ENCODE measurements at regions of chr6 and their contacts with region 1.

Region 1: DNA sequence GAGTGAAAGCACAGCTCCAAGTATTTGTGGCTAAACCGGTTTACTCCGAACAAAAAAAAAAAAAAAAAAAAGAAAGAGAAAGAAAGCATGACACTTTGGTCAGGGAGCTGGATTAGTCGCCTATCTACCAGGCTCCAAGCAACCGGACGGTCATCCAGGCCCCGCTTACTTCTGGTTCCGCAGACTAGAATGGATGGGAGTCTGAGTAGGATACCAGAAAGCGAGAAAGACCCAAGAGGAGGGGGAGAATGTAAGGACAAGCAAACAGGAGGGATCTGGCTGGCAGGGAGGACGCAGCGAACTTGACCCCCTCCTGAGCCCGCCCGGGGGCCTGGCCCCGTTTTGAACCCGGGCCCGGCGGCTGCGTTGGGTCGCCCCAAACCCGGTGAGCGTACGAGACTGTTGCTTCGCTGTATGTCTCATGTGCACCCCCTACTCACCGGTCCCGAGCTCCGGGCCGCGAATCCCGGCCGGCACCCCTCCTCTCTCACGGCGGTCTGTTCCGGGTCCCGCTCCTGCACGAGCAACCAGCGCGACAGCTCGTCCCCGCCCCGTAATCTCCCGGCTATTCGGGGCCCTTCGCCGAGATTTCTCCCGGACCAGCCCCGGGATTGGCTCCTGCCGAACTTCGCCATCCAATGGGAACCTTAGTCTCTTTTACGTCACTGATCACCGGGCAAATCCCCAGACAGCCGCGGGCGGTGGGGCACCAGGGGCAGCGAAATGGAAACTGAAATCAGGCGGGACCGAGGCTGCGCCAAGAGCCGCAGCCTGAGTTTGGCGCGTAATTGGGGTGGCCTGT is at the start of gene TRIM26:
- DNase-seq: peak; percentile 97 to 98 (median 98)
- ATAC-seq: peak; percentile 98
- H3K4me3 ChIP-seq: peak within 1 kb of the TSS; percentile 94
- H3K27ac ChIP-seq: peak within 1 kb of the TSS; percentile 95
- H3K4me1 ChIP-seq: peaks cover 4% of the 10 kb centered on the region
- H3K27me3 ChIP-seq: no peaks in the 10 kb centered on the region
- total RNA-seq, gene TRIM26: 19.9 to 27.1 (median 25.1) TPM

Region 2: GRCh38 chr6:28349892-28350737 is 1863.0 kb before region 1 on chr6 and contains the start of gene ZKSCAN3:
- intact Hi-C with region 1: loop called in 1 of 4 experiments (anchors 10 kb)
- DNase-seq: peak; percentile 82 to 94 (median 93)
- ATAC-seq: peak; percentile 94 to 98
- H3K4me3 ChIP-seq: peak within 1 kb of the TSS; percentile 87
- H3K27ac ChIP-seq: peak within 1 kb of the TSS; percentile 96
- H3K4me1 ChIP-seq: peaks cover 3% of the 10 kb centered on the region
- H3K27me3 ChIP-seq: no peaks in the 10 kb centered on the region
- total RNA-seq, gene ZKSCAN3: 4.1 to 7.2 (median 6.0) TPM

Region 3: GRCh38 chr6:29938746-29939508 is 274.1 kb before region 1 on chr6:
- intact Hi-C with region 1: no loop called
- DNase-seq: no peak
- ATAC-seq: no peak
- H3K4me3 ChIP-seq: no peak overlapping the region
- H3K27ac ChIP-seq: no peak overlapping the region
- H3K4me1 ChIP-seq: no peaks in the 10 kb centered on the region
- H3K27me3 ChIP-seq: no peaks in the 10 kb centered on the region

Region 4: GRCh38 chr6:30326526-30327260 is 113.6 kb after region 1 on chr6 and contains the start of gene TRIM39:
- intact Hi-C with region 1: loop called in 1 of 4 experiments (anchors 10 kb)
- DNase-seq: peak; percentile 90 to 97 (median 95)
- ATAC-seq: peak; percentile 89 to 91
- H3K4me3 ChIP-seq: peak within 1 kb of the TSS; percentile 82
- H3K27ac ChIP-seq: peak within 1 kb of the TSS; percentile 95
- H3K4me1 ChIP-seq: peaks cover 7% of the 10 kb centered on the region
- H3K27me3 ChIP-seq: no peaks in the 10 kb centered on the region
- total RNA-seq, gene TRIM39: 9.6 to 12.1 (median 10.7) TPM

Measured in right cardiac atrium (tissue), 5 donors.